MCF 10A (cell line): ENCODE measurements at regions of chr18 and their contacts with region 1.

Region 1: DNA sequence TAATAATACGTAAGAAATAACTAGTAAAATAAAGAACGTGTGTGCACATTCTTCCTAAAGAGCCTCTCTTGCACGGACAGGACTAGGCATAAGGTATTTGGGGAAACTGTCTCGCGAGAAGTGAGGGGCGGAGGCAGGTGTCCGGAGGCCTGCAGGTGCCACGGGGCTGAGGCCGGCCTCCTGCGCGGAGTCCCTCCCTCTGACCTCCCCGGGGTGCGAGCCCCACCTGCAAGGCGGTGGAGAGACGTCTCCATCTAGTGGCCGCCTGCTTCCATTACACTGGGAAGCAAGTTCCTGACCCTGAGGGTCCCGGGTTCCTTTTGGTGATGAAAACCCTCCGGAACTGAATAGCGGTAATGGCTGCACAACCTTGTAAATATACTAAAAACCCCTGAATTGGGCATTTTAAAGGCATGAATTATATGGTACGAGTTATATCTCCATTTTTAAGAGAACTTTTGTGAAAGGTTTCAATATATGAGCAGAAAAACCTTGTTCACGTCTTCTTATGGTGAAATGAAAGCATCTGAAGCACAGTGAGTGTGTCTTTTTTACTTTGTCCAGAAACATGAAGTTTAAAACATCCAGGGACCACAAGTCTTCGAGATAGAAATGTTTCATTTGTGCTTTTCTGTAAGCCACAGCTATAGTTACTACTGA is 35.5 kb upstream of the CTDP1 start:
- DNase-seq: peak; percentile 63
- H3K4me3 Mint-ChIP-seq: no peak overlapping the region
- H3K27ac Mint-ChIP-seq: no peak overlapping the region
- H3K4me1 Mint-ChIP-seq: peaks cover 6% of the 10 kb centered on the region
- H3K27me3 Mint-ChIP-seq: no peaks in the 10 kb centered on the region
- CTCF ChIP-seq: peak; percentile 97

Region 2: GRCh38 chr18:77765468-77765867 is 1878.7 kb before region 1 on chr18:
- CTCF ChIA-PET with region 1: no interaction called
- POLR2A ChIA-PET with region 1: no interaction called
- intact Hi-C with region 1: loop called (anchors 1 kb)
- DNase-seq: peak; percentile 28
- H3K4me3 Mint-ChIP-seq: no peak overlapping the region
- H3K27ac Mint-ChIP-seq: no peak overlapping the region
- H3K4me1 Mint-ChIP-seq: no peaks in the 10 kb centered on the region
- H3K27me3 Mint-ChIP-seq: peaks cover 59% of the 10 kb centered on the region
- CTCF ChIP-seq: peak; percentile 40

Region 3: DNA sequence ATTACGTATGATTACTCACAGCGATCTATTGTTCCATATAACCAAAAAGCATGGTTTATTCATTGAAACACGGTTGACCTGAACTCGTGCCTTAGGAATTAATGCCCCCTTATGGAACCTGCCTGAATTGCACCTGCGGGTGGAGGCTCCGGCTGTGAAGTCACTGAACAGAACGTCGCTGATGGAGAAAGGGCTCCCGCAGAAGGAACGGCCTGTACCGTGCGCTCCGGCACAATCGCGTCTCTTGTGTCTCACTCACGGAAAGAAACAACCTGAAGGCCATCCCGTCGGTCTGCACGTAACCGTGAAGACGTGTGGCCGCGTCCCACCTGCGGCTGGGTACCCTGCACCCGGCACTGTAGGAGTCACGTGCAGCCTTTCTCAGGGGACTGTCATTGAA is 115.3 kb before region 1 on chr18:
- CTCF ChIA-PET with region 1: interaction called, 3 read pairs
- POLR2A ChIA-PET with region 1: no interaction called
- intact Hi-C with region 1: loop called (anchors 5 kb)
- DNase-seq: peak; percentile 46
- H3K4me3 Mint-ChIP-seq: no peak overlapping the region
- H3K27ac Mint-ChIP-seq: no peak overlapping the region
- H3K4me1 Mint-ChIP-seq: no peaks in the 10 kb centered on the region
- H3K27me3 Mint-ChIP-seq: no peaks in the 10 kb centered on the region
- CTCF ChIP-seq: peak; percentile 48

Region 4: DNA sequence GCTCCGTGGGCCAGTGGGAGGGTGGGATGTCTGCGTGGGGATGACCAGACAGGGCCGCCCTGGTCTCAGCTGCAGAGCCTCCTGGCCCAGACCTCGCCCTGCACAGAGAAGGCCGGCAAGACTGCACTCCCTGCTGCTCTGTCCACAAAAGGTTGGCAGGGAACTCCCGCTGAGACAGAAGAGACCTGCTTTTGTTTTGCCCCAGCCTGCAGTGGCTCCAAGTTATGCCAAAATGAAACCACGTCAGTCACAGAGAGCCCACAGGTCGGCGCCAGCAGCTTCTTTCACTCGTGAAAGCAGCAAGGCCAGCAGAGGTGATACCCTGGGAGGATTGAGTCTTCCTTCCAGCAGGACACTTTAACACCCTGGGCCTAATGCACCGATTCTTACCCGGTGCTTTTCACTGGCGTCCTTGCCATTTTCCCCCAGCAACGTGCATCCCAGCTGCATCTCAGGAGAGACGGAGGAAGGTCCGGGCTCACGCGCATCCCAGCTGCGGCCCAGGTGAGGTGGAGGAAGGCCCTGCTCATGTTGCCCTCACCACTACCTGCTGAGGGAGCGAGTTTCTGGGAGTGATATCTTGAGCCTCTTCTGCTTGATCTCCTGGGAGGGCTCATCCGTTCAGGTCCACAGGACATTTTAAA is 13.3 kb after region 1 on chr18:
- CTCF ChIA-PET with region 1: interaction called, 10 read pairs
- POLR2A ChIA-PET with region 1: no interaction called
- intact Hi-C with region 1: no loop called
- DNase-seq: no peak
- H3K4me3 Mint-ChIP-seq: no peak overlapping the region
- H3K27ac Mint-ChIP-seq: no peak overlapping the region
- H3K4me1 Mint-ChIP-seq: no peaks in the 10 kb centered on the region
- H3K27me3 Mint-ChIP-seq: peaks cover 49% of the 10 kb centered on the region
- CTCF ChIP-seq: no peak